HCT116 (cell line): ENCODE measurements at regions of chr7 and their contacts with region 1.

Region 1: GRCh38 chr7:23696916-23697441 is 13.0 kb upstream of the STK31 start:
- DNase-seq: peak; percentile 76
- ATAC-seq: peak; percentile 98
- H3K4me3 ChIP-seq: no peak overlapping the region
- H3K27ac ChIP-seq: no peak overlapping the region
- H3K4me1 ChIP-seq: peaks cover 3 to 10% of the 10 kb centered on the region in 2 experiments; a peak in 3 of 4 replicates
- H3K27me3 ChIP-seq: no peaks in the 10 kb centered on the region
- CTCF ChIP-seq: peak; percentile 54 to 92 (median 81)
- POLR2A ChIP-seq: no peak
- RAD21 ChIP-seq: peak; percentile 69

Region 2: GRCh38 chr7:23462846-23463245 is 234.1 kb before region 1 on chr7:
- CTCF ChIA-PET with region 1: no interaction called
- POLR2A ChIA-PET with region 1: no interaction called
- RAD21 ChIA-PET with region 1: no interaction called
- intact Hi-C with region 1: no loop called
- DNase-seq: no peak
- ATAC-seq: no peak
- H3K4me3 ChIP-seq: no peak overlapping the region
- H3K27ac ChIP-seq: no peak overlapping the region
- H3K4me1 ChIP-seq: peaks cover 44 to 49% of the 10 kb centered on the region in 2 experiments
- H3K27me3 ChIP-seq: no peaks in the 10 kb centered on the region
- CTCF ChIP-seq: peak; percentile 12 to 45 (median 17); a peak in 3 of 6 replicates
- POLR2A ChIP-seq: no peak
- RAD21 ChIP-seq: peak; percentile 57

Region 3: DNA sequence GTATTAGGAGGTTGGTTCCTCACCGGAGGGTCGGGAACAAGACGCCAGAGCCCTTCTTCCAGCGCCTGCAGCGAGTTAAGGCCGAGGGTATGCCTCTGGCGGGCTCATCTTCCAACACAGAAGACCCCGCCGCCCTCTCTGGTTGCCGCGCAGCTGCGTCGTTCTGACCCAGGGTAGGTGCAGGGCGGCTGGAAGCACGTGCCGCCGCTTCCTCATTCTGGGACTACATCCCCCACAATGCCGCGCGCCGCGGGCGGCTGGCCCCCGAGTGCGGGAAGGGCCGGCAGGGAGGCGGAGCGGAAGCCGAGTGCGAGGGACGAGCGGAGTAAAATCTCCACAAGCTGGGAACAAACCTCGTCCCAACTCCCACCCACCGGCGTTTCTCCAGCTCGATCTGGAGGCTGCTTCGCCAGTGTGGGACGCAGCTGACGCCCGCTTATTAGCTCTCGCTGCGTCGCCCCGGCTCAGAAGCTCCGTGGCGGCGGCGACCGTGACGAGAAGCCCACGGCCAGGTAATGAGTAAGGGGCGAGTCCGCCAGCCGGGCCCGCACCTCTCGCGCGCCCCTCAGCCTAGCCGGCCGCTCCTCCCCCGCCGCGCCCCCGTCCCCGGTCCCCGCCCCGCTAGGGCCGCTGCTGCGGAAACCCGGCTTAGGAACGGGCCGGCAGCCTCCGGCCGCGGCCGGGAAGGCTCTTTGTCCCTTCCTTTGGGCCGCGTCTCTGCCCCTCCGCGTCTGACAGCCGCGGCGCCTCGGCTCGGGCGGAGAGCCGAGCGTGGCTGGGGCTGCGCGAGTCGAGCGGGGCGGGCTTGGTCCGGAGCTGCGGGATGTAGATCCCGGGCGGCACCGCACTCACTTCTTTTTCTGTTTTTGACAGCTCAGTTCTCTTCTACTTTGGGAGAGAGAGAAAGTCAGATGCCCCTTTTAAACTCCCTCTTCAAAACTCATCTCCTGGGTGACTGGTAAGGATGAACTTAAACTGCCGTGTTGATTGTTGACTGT is 99.6 kb before region 1 on chr7 and contains the start of gene CCDC126:
- CTCF ChIA-PET with region 1: interaction called, 10 read pairs
- POLR2A ChIA-PET with region 1: interaction called, 3 read pairs
- RAD21 ChIA-PET with region 1: no interaction called
- intact Hi-C with region 1: no loop called
- DNase-seq: peak; percentile 79
- ATAC-seq: peak; percentile 89
- H3K4me3 ChIP-seq: peak within 1 kb of the TSS; percentile 56 to 74
- H3K27ac ChIP-seq: peak within 1 kb of the TSS; percentile 69
- H3K4me1 ChIP-seq: peaks cover 4 to 31% of the 10 kb centered on the region in 2 experiments; a peak in 3 of 4 replicates
- H3K27me3 ChIP-seq: no peaks in the 10 kb centered on the region
- CTCF ChIP-seq: no peak
- POLR2A ChIP-seq: no peak
- RAD21 ChIP-seq: no peak
- total RNA-seq, gene CCDC126: 5.0 TPM

Region 4: DNA sequence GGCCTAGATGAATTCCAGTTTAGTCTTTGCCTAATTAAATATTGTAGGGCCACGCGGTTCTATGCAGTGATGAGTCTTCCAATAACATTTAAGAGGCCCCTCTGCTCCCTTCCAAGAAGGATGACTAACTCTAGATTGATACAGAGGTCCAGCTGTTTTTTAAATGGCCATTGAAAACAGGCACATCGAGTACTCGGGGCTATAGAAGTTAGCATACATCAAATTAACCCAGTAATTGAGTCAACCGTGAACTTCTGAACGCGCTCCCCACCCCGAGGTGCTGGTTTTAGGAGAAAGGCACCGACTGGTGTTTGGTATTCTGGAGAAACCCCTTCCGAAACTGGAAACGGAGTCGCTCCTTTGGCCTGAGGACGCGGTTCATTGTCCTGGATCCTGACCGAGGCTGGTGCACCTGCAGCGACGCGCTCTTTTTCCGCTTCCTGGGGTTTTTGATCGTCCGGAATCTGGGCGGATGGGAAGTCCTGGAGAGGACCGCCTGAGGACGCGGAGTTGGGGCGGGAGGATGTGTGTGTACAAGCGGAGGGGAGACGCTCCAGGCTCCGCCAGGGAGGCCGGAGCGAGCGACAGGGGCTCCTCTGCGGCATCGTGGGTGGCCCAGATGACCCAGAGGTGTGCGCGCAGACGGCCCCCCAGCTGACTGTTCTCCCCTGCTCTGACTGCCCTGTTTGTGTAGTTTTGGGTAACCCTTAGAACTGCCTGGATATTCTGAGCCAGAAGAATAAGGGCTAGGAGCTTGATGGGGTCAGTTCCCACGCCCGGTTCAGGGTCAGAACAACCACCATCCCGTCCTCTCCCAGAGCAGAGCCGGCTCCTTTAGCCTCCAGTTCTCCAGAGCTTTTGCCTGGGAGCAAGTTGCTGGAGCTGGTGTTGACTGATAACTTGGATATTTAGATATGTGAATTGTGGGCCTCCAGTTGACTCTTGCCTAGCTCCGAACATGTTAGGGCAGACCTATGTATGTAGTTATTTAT is 16.3 kb before region 1 on chr7:
- CTCF ChIA-PET with region 1: interaction called, 18 read pairs
- POLR2A ChIA-PET with region 1: no interaction called
- RAD21 ChIA-PET with region 1: no interaction called
- intact Hi-C with region 1: no loop called
- DNase-seq: no peak
- ATAC-seq: peak; percentile 55
- H3K4me3 ChIP-seq: peak overlapping the region; percentile 36 to 41
- H3K27ac ChIP-seq: no peak overlapping the region
- H3K4me1 ChIP-seq: peaks cover 0 to 9% of the 10 kb centered on the region in 2 experiments; a peak in 1 of 4 replicates
- H3K27me3 ChIP-seq: no peaks in the 10 kb centered on the region
- CTCF ChIP-seq: no peak
- POLR2A ChIP-seq: no peak
- RAD21 ChIP-seq: no peak

Region 5: GRCh38 chr7:23685731-23686130 is 11.2 kb before region 1 on chr7:
- CTCF ChIA-PET with region 1: interaction called, 18 read pairs
- POLR2A ChIA-PET with region 1: no interaction called
- RAD21 ChIA-PET with region 1: no interaction called
- intact Hi-C with region 1: no loop called
- DNase-seq: no peak
- ATAC-seq: no peak
- H3K4me3 ChIP-seq: no peak overlapping the region
- H3K27ac ChIP-seq: no peak overlapping the region
- H3K4me1 ChIP-seq: peaks cover 0 to 2% of the 10 kb centered on the region in 2 experiments; a peak in 1 of 4 replicates
- H3K27me3 ChIP-seq: no peaks in the 10 kb centered on the region
- CTCF ChIP-seq: no peak
- POLR2A ChIP-seq: no peak
- RAD21 ChIP-seq: no peak

Region 6: DNA sequence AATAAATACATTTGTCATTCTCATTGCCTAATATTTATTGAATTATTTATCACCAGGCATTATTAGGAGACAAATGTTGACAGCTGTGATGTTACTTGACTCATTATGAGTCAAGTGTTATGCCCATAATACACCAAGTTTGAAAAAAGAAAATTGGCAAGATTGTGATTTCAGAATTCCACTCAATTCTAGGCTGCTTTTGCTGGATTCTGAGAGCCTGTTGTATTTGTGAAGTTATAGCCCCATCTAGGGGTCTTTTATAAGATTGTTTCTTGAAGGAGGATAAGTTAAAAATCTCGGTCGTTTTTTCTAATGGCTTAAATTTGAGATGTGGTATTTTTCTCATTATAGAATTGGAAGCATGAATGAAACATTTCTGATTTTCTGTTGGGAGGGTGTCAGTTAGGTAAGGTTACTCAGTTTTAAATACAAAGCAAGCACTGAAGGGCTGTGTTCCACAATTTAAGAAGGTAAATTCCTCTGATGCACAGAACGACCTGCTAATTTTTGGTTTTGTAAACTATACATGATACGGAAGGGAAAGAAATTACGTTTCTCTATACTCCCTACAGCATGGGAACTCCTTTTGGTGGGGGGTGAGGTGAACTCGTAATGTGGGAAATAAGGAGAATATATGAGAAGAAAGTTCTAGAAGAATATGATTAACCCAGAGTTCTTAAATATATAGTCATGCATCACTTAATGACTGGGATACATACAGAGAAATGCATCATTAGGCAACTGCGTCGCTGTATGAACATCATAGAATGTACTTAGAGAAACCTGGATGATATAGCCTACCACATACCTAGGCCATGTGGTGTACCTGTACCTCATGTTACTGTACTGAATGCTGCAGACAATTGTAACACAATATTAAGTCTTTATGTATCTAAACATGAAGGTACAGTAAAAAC is 15.6 kb after region 1 on chr7:
- CTCF ChIA-PET with region 1: interaction called, 31 read pairs
- POLR2A ChIA-PET with region 1: interaction called, 4 read pairs
- RAD21 ChIA-PET with region 1: no interaction called
- intact Hi-C with region 1: no loop called
- DNase-seq: peak; percentile 67
- ATAC-seq: peak; percentile 64
- H3K4me3 ChIP-seq: no peak overlapping the region
- H3K27ac ChIP-seq: no peak overlapping the region
- H3K4me1 ChIP-seq: peaks cover 0 to 17% of the 10 kb centered on the region in 2 experiments; a peak in 2 of 4 replicates
- H3K27me3 ChIP-seq: no peaks in the 10 kb centered on the region
- CTCF ChIP-seq: peak; percentile 18 to 96 (median 70); a peak in 5 of 6 replicates
- POLR2A ChIP-seq: no peak
- RAD21 ChIP-seq: peak; percentile 92